ENCODE measurements at regions of chr14 and their contacts with region 1.

Region 1: GRCh38 chr14:104130974-104131651 is 7.3 kb upstream of the KIF26A start:
- DNase-seq: no peak
- H3K4me3 ChIP-seq: no peak overlapping the region
- H3K27me3 ChIP-seq: peaks cover 6% of the 10 kb centered on the region
- CTCF ChIP-seq: peak; percentile 47

Region 2: GRCh38 chr14:104094709-104095438 is 36.2 kb before region 1 on chr14:
- CTCF ChIA-PET with region 1: interaction called, 7 read pairs
- POLR2A ChIA-PET with region 1: interaction called, 15 read pairs
- DNase-seq: no peak
- H3K4me3 ChIP-seq: no peak overlapping the region
- H3K27me3 ChIP-seq: no peaks in the 10 kb centered on the region
- CTCF ChIP-seq: peak; percentile 90